Breast epithelium (tissue), 4 donors: ENCODE measurements at regions of chr7 and their contacts with region 1.

Region 1: GRCh38 chr7:141001122-141001521 is 13.6 kb downstream of the MRPS33 start:
- DNase-seq: no peak
- H3K4me3 ChIP-seq: no peak overlapping the region
- H3K27ac ChIP-seq: no peak overlapping the region
- H3K4me1 ChIP-seq: no peaks in the 10 kb centered on the region
- H3K27me3 ChIP-seq: no peaks in the 10 kb centered on the region
- CTCF ChIP-seq: no peak
- POLR2A ChIP-seq: no peak

Region 2: GRCh38 chr7:139271718-139272628 is 1729.1 kb before region 1 on chr7:
- intact Hi-C with region 1: loop called (anchors 10 kb)
- DNase-seq: no peak
- H3K4me3 ChIP-seq: no peak overlapping the region
- H3K27ac ChIP-seq: no peak overlapping the region
- H3K4me1 ChIP-seq: no peaks in the 10 kb centered on the region
- H3K27me3 ChIP-seq: no peaks in the 10 kb centered on the region
- CTCF ChIP-seq: no peak
- POLR2A ChIP-seq: no peak

Region 3: GRCh38 chr7:140902303-140902953 is 98.7 kb before region 1 on chr7:
- intact Hi-C with region 1: no loop called
- DNase-seq: no peak
- H3K4me3 ChIP-seq: no peak overlapping the region
- H3K27ac ChIP-seq: no peak overlapping the region
- H3K4me1 ChIP-seq: no peaks in the 10 kb centered on the region
- H3K27me3 ChIP-seq: no peaks in the 10 kb centered on the region
- CTCF ChIP-seq: no peak
- POLR2A ChIP-seq: no peak

Region 4: GRCh38 chr7:141045842-141046630 is 44.9 kb after region 1 on chr7:
- intact Hi-C with region 1: no loop called
- DNase-seq: no peak
- H3K4me3 ChIP-seq: no peak overlapping the region
- H3K27ac ChIP-seq: no peak overlapping the region
- H3K4me1 ChIP-seq: no peaks in the 10 kb centered on the region
- H3K27me3 ChIP-seq: no peaks in the 10 kb centered on the region
- CTCF ChIP-seq: no peak
- POLR2A ChIP-seq: no peak